Activated CD8-positive, alpha-beta memory T cell treated with anti-CD3 and anti-CD28 coated beads, Interleukin-2, amount 10 ng/mL, durations not matched to agents 7 days and 5 days (primary cell): ENCODE measurements at regions of chr7 and their contacts with region 1.

Region 1: DNA sequence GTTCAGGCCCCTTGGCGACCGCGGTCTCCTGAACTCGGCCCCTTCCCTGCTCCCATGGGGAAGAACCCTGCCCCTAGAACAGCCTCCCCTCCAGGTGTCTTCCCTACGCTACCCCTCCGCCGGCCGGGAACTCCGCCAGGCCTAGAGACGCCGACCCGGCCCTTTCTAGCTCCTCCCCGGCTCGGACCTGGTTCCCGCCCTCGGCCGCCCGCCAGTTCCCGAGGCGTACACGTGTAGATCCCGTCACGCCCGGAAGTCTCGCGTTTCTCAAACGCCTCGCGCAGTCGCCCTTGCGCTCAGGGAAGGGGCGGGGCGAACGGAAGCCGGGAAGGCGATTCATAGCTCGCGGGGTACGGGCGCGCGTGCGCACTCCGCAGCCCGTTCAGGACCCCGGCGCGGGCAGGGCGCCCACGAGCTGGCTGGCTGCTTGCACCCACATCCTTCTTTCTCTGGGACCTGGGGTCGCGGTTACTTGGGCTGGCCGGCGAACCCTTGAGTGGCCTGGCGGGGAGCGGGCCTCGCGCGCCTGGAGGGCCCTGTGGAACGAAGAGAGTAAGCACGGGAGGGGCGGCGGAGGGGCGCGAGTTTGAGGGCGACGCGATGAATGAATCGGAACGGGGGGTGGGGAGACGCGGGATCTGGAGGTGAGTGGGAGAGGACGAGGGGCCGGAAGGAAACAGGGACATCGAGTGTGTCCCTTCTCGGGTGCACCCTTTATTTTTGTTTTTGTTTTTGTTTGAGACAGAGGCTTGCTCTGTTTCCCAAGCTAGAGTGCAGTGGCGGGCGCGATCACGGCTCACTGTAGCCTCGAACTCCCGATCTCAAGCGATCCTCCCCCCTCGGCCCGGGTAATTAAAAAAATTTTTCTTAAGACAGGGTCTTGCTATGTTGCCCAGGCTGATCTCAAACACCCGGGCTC is at the start of gene POP7:
- DNase-seq: peak; percentile 99
- ATAC-seq: peak; percentile 95
- H3K4me3 Mint-ChIP-seq: peak within 1 kb of the TSS; percentile 94
- H3K27ac Mint-ChIP-seq: peak within 1 kb of the TSS; percentile 92
- H3K4me1 Mint-ChIP-seq: peaks cover 24% of the 10 kb centered on the region
- H3K27me3 Mint-ChIP-seq: peaks cover 5% of the 10 kb centered on the region
- total RNA-seq, gene POP7: 43.6 to 53.4 TPM

Region 2: GRCh38 chr7:99674995-99675742 is 1030.8 kb before region 1 on chr7:
- CTCF ChIA-PET with region 1: no interaction called
- DNase-seq: no peak
- ATAC-seq: no peak
- H3K4me3 Mint-ChIP-seq: no peak overlapping the region
- H3K27ac Mint-ChIP-seq: no peak overlapping the region
- H3K4me1 Mint-ChIP-seq: peaks cover 6% of the 10 kb centered on the region
- H3K27me3 Mint-ChIP-seq: no peaks in the 10 kb centered on the region

Region 3: GRCh38 chr7:100604028-100604975 is 101.7 kb before region 1 on chr7:
- CTCF ChIA-PET with region 1: interaction called, 10 read pairs
- DNase-seq: peak; percentile 91
- ATAC-seq: peak; percentile 78
- H3K4me3 Mint-ChIP-seq: peak overlapping the region; percentile 86
- H3K27ac Mint-ChIP-seq: peak overlapping the region; percentile 93
- H3K4me1 Mint-ChIP-seq: peaks cover 23% of the 10 kb centered on the region
- H3K27me3 Mint-ChIP-seq: peaks cover 5% of the 10 kb centered on the region

Region 4: DNA sequence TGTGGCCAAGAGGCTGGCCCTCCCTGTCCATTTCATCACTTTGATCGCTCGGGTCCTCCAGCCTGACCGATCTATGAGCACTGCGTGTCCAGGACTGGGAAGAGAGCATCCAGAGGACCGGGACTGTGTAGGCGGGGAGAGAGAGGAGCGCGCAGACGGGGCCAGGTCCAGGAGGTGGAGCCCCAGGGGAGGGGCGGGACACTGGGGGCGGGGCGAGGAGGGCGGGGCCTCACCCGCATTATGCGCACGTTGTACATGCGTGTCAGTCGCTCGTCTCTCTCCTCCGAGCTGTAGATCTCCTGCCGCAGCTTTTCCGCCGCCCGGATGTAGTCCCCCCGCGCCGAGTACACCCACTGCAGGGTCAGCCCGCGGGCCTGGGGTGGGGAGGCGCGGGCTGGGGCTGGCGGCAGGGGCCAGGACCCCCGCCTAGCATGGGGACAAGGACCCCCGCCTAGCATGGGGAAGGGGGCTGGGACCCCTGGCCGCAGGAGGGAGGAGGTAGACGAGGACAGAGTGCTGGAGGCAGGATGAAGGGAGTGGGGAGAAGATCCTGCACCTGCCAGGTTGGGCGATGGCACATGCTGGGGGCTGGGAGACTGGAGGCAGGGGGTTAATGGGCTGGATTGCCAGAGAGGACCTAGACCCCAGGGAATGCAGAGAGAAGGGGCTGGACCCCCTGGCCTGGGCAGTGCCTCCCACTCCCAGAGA is 79.3 kb before region 1 on chr7:
- CTCF ChIA-PET with region 1: interaction called, 21 read pairs
- DNase-seq: peak; percentile 96
- ATAC-seq: peak; percentile 96
- H3K4me3 Mint-ChIP-seq: peak overlapping the region; percentile 69
- H3K27ac Mint-ChIP-seq: peak overlapping the region; percentile 81
- H3K4me1 Mint-ChIP-seq: peaks cover 50% of the 10 kb centered on the region
- H3K27me3 Mint-ChIP-seq: no peaks in the 10 kb centered on the region

Region 5: DNA sequence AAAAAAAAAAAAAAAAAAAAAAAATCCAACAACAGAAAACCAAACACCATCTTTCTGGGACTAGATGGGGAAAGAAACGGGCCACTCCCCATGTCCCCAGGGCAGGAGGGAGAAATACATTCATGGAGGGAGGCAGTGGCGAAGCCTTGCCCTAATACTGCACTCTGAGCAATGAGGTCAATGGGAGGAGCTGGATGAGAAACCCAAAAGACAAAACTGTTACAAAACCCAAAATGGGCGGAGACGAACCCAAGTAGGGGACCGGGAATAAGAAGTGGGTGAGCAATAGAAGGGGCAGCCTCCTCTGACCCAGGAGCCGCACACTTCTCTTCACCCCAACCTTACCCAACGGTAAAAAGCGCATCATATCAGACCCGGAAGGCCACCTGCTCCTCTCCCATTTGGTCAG is 25.8 kb before region 1 on chr7:
- CTCF ChIA-PET with region 1: interaction called, 15 read pairs
- DNase-seq: no peak
- ATAC-seq: no peak
- H3K4me3 Mint-ChIP-seq: no peak overlapping the region
- H3K27ac Mint-ChIP-seq: peak overlapping the region; percentile 57
- H3K4me1 Mint-ChIP-seq: peaks cover 15% of the 10 kb centered on the region
- H3K27me3 Mint-ChIP-seq: no peaks in the 10 kb centered on the region

Region 6: DNA sequence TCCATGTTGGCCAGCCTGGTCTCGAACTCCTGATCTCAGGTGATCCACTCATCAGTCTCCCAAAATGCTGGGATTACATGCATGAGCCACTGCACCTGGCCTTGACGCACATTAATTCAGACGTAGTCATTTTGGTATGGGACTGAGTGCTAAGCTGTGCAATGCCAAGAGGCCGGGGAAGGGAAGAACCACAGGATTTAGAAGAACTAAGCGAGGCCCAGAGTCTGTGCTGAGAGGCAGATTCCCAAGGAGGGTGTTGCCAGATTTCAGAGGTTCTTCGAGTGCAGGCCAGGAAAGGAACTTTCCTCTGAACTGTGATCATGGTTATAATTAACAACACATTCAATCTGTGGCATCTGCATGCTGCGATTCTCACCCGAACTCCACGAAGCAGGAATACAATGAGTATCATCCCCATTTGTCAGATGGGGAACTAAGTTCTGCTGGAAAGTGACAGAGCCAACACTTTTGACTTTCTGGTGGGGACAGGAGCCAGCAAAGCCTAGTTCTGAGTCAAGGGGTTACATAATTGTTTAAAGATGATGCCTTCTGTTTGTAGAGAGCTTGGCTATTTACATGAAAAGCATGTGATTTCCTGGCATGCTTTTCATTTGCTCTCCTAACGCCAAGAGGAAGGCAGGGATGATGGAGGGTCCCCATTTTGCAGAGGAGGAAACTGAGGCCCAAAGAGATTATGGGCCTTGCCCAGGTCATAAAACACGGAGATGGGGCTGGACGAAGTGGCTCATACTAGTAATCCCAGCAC is 21.2 kb after region 1 on chr7:
- CTCF ChIA-PET with region 1: interaction called, 48 read pairs
- DNase-seq: no peak
- ATAC-seq: no peak
- H3K4me3 Mint-ChIP-seq: no peak overlapping the region
- H3K27ac Mint-ChIP-seq: no peak overlapping the region
- H3K4me1 Mint-ChIP-seq: peaks cover 3% of the 10 kb centered on the region
- H3K27me3 Mint-ChIP-seq: peaks cover 27% of the 10 kb centered on the region